AG04450 (cell line): ENCODE measurements at regions of chr15 and their contacts with region 1.

Region 1: DNA sequence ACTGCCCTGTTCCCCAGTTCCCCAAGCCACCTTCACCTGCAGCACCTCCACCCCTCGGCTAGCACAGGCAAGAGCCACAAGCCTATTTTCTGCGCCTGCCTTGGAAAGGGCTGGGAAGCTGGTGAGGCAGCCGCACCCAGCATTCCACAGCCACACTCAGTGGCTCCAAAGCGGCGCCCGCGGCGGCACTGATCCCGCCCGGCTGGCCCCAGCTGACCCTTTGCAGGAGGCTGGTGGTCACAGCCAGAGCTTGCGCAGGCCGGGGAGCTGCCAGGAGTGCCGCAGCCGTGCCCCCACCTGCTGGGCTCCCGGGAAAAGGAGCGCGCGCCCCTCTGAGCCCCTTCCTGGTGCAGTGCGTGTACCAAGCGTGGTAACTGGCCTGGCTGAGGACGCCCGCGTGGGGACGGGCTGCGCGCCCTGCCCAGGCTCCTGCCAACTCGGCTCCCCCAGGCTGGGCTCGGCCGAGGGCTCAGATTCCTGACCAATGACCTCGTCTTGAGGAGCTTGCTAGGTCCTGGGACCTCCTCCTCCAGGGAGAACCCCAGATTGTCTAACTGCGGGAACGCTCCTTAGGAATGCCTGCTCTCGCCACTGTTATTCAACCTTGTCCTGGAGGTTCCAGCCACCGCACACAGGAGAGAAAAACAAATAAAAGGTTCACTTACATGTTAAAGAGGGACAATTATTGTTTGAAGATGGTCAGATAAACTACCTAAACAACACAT is 13.3 kb downstream of the GRAMD2A start:
- DNase-seq: no peak
- H3K4me3 ChIP-seq: peak overlapping the region; percentile 20; the same call in 1 of the 2 replicates
- H3K27ac ChIP-seq: no peak overlapping the region
- H3K27me3 ChIP-seq: peaks cover 32% of the 10 kb centered on the region
- CTCF ChIP-seq: no peak

Region 2: GRCh38 chr15:72265031-72265430 is 80.7 kb after region 1 on chr15:
- CTCF ChIA-PET with region 1: no interaction called
- POLR2A ChIA-PET with region 1: interaction called, 10 read pairs
- DNase-seq: no peak
- H3K4me3 ChIP-seq: no peak overlapping the region
- H3K27ac ChIP-seq: no peak overlapping the region
- H3K27me3 ChIP-seq: no peaks in the 10 kb centered on the region
- CTCF ChIP-seq: no peak